ENCODE measurements at regions of chr19 and their contacts with region 1.

Region 1: DNA sequence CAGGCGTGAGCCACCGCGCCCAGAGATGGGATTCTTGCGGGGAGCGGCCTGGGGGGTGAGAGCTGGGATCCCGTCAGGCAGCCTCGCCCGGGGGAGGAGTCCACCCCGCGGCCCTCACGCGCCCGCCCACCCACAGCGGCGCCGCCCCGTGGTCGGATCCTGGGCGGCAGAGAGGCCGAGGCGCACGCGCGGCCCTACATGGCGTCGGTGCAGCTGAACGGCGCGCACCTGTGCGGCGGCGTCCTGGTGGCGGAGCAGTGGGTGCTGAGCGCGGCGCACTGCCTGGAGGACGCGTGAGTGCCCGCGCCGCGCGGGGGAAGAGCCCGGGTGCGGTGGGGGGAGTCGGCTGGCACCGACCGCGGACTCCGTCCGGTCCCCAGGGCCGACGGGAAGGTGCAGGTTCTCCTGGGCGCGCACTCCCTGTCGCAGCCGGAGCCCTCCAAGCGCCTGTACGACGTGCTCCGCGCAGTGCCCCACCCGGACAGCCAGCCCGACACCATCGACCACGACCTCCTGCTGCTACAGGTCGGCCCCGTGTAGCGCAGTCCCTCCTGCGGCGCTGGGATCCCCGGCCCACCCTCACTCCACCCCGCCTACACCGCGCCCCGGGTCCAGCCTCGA is 1.1 kb downstream of the CFD start:
- DNase-seq: peak; percentile 42 to 64 (median 59)
- H3K4me3 ChIP-seq: no peak overlapping the region
- H3K4me3 Mint-ChIP-seq: peak overlapping the region in 3 of 7 donors; percentile 23 to 32 (median 24)
- H3K27ac ChIP-seq: no peak overlapping the region
- H3K27ac Mint-ChIP-seq: no peak overlapping the region
- H3K4me1 ChIP-seq: peaks cover 24% of the 10 kb centered on the region
- H3K4me1 Mint-ChIP-seq: peaks cover 13 to 21% (median 15%) of the 10 kb centered on the region in 3 donors
- H3K27me3 ChIP-seq: peaks cover 13% of the 10 kb centered on the region
- H3K27me3 Mint-ChIP-seq: peaks cover 6 to 10% of the 10 kb centered on the region in 2 donors

Region 2: DNA sequence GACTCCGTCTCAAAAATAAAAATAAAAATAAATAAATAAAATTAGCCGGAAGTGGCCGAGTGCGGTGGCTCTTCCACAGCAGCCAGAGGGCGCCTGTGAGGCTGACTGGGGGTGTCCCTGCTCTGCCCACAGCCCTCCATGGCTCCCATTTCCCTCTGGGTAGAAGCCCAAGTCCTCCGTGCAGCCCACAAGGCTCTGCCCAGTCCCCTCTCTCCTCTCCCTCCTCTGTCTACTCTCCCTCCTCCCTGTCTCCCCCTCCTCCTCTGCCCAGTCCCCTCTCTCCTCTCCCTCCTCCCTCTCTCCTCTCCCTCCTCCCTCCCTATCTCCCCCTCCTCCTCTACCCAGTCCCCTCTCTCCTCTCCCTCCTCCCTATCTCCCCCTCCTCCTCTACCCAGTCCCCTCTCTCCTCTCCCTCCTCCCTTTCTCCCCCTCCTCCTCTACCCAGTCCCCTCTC is 89.2 kb before region 1 on chr19:
- CTCF ChIA-PET with region 1: interaction called, 11 read pairs
- POLR2A ChIA-PET with region 1: no interaction called
- DNase-seq: peak in 1 of 5 donors; percentile 13
- H3K4me3 ChIP-seq: no peak overlapping the region
- H3K4me3 Mint-ChIP-seq: no peak overlapping the region
- H3K27ac ChIP-seq: no peak overlapping the region
- H3K27ac Mint-ChIP-seq: no peak overlapping the region
- H3K4me1 ChIP-seq: no peaks in the 10 kb centered on the region
- H3K4me1 Mint-ChIP-seq: peaks cover 3 to 4% (median 4%) of the 10 kb centered on the region in 3 donors
- H3K27me3 ChIP-seq: no peaks in the 10 kb centered on the region
- H3K27me3 Mint-ChIP-seq: peaks cover 8 to 10% of the 10 kb centered on the region in 2 donors

Region 3: GRCh38 chr19:883661-884211 is 23.1 kb after region 1 on chr19:
- CTCF ChIA-PET with region 1: interaction called, 20 read pairs
- POLR2A ChIA-PET with region 1: interaction called, 9 read pairs
- DNase-seq: no peak
- H3K4me3 ChIP-seq: no peak overlapping the region
- H3K4me3 Mint-ChIP-seq: no peak overlapping the region
- H3K27ac ChIP-seq: no peak overlapping the region
- H3K27ac Mint-ChIP-seq: no peak overlapping the region
- H3K4me1 ChIP-seq: peaks cover 4% of the 10 kb centered on the region
- H3K4me1 Mint-ChIP-seq: peaks cover 0 to 14% (median 6%) of the 10 kb centered on the region in 3 donors
- H3K27me3 ChIP-seq: no peaks in the 10 kb centered on the region
- H3K27me3 Mint-ChIP-seq: peaks cover 0 to 2% of the 10 kb centered on the region in 2 donors

Region 4: GRCh38 chr19:900302-901111 is 39.9 kb after region 1 on chr19:
- CTCF ChIA-PET with region 1: interaction called, 13 read pairs
- POLR2A ChIA-PET with region 1: interaction called, 4 read pairs
- DNase-seq: peak in 1 of 5 donors; percentile 30
- H3K4me3 ChIP-seq: no peak overlapping the region
- H3K4me3 Mint-ChIP-seq: no peak overlapping the region
- H3K27ac ChIP-seq: no peak overlapping the region
- H3K27ac Mint-ChIP-seq: peak overlapping the region in 4 of 8 donors; percentile 33 to 81 (median 60)
- H3K4me1 ChIP-seq: peaks cover 18% of the 10 kb centered on the region
- H3K4me1 Mint-ChIP-seq: peaks cover 0 to 39% (median 6%) of the 10 kb centered on the region in 3 donors
- H3K27me3 ChIP-seq: no peaks in the 10 kb centered on the region
- H3K27me3 Mint-ChIP-seq: no peaks in the 10 kb centered on the region

Region 5: GRCh38 chr19:920051-920864 is 59.7 kb after region 1 on chr19:
- CTCF ChIA-PET with region 1: interaction called, 107 read pairs
- POLR2A ChIA-PET with region 1: interaction called, 17 read pairs
- DNase-seq: peak; percentile 55 to 85 (median 68)
- H3K4me3 ChIP-seq: peak overlapping the region; percentile 45
- H3K4me3 Mint-ChIP-seq: peak overlapping the region; percentile 77 to 88 (median 81)
- H3K27ac ChIP-seq: peak overlapping the region; percentile 9
- H3K27ac Mint-ChIP-seq: peak overlapping the region in 7 of 8 donors; percentile 36 to 90 (median 81)
- H3K4me1 ChIP-seq: peaks cover 29% of the 10 kb centered on the region
- H3K4me1 Mint-ChIP-seq: peaks cover 4 to 36% (median 17%) of the 10 kb centered on the region in 3 donors
- H3K27me3 ChIP-seq: peaks cover 4% of the 10 kb centered on the region
- H3K27me3 Mint-ChIP-seq: peaks cover 2 to 5% of the 10 kb centered on the region in 2 donors

Region 6: DNA sequence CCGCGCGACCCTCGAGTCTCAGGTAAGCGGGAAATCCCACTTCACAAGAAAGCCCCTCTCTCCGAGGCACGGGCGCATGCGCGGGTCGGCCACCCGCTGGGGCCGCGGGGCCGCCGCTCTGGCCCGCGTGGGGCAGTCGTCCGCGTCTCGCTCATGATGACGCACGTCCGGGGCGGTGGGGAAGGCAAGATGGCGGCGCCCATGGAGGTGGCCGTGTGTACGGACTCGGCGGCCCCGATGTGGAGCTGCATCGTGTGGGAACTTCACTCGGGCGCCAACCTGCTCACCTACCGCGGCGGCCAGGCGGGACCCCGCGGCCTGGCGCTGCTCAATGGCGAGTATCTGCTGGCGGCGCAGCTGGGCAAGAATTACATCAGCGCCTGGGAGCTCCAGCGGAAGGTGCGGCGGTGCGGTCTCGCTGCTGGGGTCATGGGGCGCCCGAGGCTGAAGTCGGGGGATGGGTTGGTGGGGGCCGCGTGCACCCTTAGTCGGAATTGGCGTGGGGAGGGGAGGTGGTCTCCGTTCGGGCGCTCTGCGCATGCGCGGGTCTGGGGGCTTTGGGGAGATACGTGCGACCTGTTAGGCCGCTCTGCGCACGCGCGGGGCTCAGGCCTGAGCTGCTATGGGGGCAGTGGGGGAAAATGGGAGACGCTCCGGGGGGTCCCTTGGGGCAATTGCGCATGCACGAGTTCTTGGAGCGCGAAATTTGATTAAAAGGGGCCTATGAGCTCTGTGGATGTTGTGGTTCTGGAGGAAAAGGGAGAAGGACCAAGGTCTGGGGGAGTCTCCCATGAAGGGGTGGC is 123.8 kb after region 1 on chr19 and contains the start of gene WDR18:
- CTCF ChIA-PET with region 1: interaction called, 29 read pairs
- POLR2A ChIA-PET with region 1: interaction called, 3 read pairs
- DNase-seq: peak; percentile 75 to 92 (median 84)
- H3K4me3 ChIP-seq: peak within 1 kb of the TSS; percentile 76
- H3K4me3 Mint-ChIP-seq: peak within 1 kb of the TSS; percentile 89 to 98 (median 93)
- H3K27ac ChIP-seq: peak within 1 kb of the TSS; percentile 87
- H3K27ac Mint-ChIP-seq: peak within 1 kb of the TSS; percentile 85 to 96 (median 92)
- H3K4me1 ChIP-seq: peaks cover 18% of the 10 kb centered on the region
- H3K4me1 Mint-ChIP-seq: peaks cover 15 to 30% (median 24%) of the 10 kb centered on the region in 3 donors
- H3K27me3 ChIP-seq: no peaks in the 10 kb centered on the region
- H3K27me3 Mint-ChIP-seq: no peaks in the 10 kb centered on the region
- total RNA-seq, gene WDR18: 108 to 133 TPM